Calu3 (cell line): ENCODE measurements at regions of chr20 and their contacts with region 1.

Region 1: GRCh38 chr20:46022411-46023147 is 6.4 kb upstream of the SLC12A5 start:
- DNase-seq: peak; percentile 91
- H3K4me3 Mint-ChIP-seq: peak overlapping the region; percentile 49
- H3K27ac Mint-ChIP-seq: no peak overlapping the region
- H3K4me1 Mint-ChIP-seq: peaks cover 8% of the 10 kb centered on the region
- H3K27me3 Mint-ChIP-seq: peaks cover 87% of the 10 kb centered on the region
- CTCF ChIP-seq: peak; percentile 98

Region 2: GRCh38 chr20:45890985-45891983 is 131.3 kb before region 1 on chr20 and contains the starts of genes CTSA and NEURL2:
- CTCF ChIA-PET with region 1: no interaction called
- intact Hi-C with region 1: no loop called
- DNase-seq: peak; percentile 94
- H3K4me3 Mint-ChIP-seq: peak within 1 kb of the TSS; percentile 97
- H3K27ac Mint-ChIP-seq: peak within 1 kb of the TSS; percentile 95
- H3K4me1 Mint-ChIP-seq: peaks cover 9% of the 10 kb centered on the region
- H3K27me3 Mint-ChIP-seq: no peaks in the 10 kb centered on the region
- CTCF ChIP-seq: no peak
- total RNA-seq, gene CTSA: 164 and 201 TPM in 2 replicates
- total RNA-seq, gene NEURL2: 6.8 and 8.3 TPM in 2 replicates

Region 3: DNA sequence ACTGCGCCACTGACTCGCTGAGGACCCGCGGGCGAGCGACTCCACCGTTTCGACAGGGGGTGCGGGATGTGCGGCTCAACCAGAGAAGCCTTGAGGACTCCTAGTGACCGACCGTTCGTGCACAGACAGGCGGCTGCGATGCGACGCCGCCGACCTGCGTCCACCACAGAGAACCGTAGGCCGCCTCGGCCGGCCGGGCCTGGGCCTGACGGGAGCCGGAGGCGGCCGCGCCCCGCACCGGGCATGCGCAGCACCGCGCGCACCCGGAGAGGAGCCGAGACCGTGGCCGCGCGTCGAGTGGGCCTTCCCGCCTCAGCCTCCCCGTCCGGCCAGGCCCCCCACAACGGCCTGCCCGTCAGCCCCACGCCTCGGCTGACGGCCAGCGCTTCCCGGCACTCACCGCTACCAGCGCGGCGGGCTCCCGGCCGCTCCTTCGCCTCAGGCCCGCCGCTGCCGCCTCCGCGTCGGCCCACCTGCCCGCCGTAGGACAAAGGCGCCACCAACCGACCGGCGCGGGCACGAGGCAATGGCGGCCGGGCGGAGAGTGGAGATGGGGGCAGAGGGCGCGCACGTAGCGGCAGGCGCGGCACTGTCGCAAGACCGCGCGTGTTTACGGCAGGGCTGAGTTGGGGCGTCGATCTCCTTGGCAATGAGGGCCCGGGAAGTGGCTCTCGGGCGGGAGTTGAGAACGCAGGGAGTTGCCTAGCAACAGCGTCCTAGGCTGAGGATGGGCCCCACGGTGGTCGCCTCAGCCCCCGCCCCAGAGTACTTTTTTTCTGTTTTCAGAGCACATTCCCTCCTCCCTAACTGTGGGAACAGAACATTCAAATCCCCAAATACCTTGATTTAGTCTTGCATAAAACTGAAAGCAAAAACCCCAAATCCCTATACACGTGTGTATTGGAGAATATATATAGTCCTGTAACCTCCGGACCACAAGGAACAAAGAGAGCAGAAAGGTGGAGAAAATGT is 67.1 kb after region 1 on chr20 and contains the start of gene NCOA5:
- CTCF ChIA-PET with region 1: interaction called, 14 read pairs
- intact Hi-C with region 1: loop called (anchors 2 kb)
- DNase-seq: peak; percentile 99
- H3K4me3 Mint-ChIP-seq: peak within 1 kb of the TSS; percentile 68
- H3K27ac Mint-ChIP-seq: peak within 1 kb of the TSS; percentile 45
- H3K4me1 Mint-ChIP-seq: peaks cover 35% of the 10 kb centered on the region
- H3K27me3 Mint-ChIP-seq: no peaks in the 10 kb centered on the region
- CTCF ChIP-seq: peak; percentile 12
- total RNA-seq, gene NCOA5: 31.7 and 34.4 TPM in 2 replicates

Region 4: DNA sequence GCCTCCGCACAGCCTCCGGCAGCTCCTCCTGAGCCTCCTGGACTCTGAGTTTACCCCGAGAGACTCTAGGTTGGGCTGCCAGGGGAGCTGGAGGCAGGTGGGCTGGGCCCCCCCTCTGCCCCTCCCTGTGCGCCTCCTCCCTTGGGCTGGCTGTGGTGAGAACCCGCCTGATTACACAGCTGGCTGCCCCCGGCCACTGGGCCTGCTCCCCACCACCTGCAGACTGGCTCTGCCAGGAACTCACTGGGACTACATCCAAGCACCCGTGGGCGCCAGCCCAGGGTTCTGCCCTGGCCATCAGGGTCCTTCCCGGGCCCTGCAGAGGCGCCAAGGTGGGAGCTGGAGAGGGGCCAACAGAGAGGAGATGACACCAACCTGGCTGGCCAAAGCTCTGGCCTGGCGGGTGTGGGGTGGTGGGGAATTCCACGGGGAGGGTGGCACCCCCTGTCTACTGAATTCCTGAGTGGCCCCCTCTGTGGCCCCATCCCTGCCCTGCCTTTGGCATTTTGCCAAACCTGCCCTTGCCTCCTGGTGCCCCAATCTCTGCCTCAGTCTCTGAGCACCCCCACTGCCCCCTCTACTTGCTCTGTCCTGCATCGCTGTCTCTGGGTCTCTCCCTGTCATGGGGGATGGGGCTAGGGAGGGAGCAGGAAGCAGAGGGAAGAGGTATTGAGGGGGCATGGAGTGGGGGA is 307.6 kb after region 1 on chr20:
- CTCF ChIA-PET with region 1: no interaction called
- intact Hi-C with region 1: loop called (anchors 10 kb)
- DNase-seq: no peak
- H3K4me3 Mint-ChIP-seq: no peak overlapping the region
- H3K27ac Mint-ChIP-seq: no peak overlapping the region
- H3K4me1 Mint-ChIP-seq: no peaks in the 10 kb centered on the region
- H3K27me3 Mint-ChIP-seq: peaks cover 100% of the 10 kb centered on the region
- CTCF ChIP-seq: no peak